Activated CD8-positive, alpha-beta memory T cell treated with anti-CD3 and anti-CD28 coated beads, Interleukin-2, amount 10 ng/mL, durations not matched to agents 7 days and 5 days (primary cell): ENCODE measurements at regions of chr7 and their contacts with region 1.

Region 1: DNA sequence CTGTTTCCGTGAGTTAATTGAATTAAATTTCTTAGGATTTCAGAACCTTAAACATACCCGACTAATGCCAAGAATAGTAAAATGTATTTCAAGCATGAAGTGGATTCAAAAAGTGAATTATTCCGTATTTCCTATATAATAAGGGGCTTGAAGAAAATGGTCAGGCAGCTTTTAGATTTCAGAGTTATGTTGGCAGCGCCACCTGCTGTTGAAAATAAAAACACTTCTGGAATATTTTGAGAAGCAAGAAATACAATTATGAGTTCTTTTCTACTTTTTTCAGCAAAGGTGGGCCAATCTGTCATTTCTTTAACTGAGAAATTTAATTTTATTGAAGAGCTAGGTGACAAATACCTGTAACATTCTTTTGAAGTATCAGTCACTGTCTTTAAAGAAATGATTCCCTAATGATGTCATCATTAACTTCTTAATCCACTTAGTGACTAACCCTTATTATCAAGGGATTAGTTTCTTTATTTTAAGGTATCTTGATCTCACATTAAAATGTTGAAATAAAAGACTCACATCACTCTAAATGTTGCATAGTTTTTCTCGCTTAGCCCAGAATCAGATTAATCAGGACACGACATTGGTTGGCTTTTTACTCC is 36.6 kb upstream of the AGR3 start:
- DNase-seq: no peak
- ATAC-seq: no peak
- H3K4me3 Mint-ChIP-seq: no peak overlapping the region
- H3K27ac Mint-ChIP-seq: no peak overlapping the region
- H3K4me1 Mint-ChIP-seq: peaks cover 37% of the 10 kb centered on the region
- H3K27me3 Mint-ChIP-seq: no peaks in the 10 kb centered on the region

Region 2: DNA sequence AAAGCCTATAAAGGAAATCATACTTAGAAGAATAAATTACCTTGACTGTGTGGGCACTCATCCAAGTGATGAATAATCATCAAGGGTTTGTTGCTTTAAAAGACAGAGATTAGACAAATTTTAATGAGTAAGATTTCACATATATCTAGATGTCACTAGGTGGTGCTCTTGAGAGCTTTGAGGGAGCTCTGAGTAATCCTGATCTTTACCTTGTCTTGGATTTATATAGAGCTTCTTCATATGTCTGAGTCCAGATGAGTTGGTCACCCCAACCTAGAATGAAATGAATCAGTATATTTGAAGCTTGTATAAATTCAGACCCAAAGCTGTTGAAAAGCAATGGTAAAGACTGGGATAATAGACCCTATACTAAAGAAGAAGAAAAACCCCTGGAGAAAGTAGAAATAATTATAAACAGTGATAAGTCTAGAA is 117.3 kb before region 1 on chr7:
- CTCF ChIA-PET with region 1: interaction called, 30 read pairs
- DNase-seq: no peak
- ATAC-seq: peak; percentile 66
- H3K4me3 Mint-ChIP-seq: no peak overlapping the region
- H3K27ac Mint-ChIP-seq: no peak overlapping the region
- H3K4me1 Mint-ChIP-seq: no peaks in the 10 kb centered on the region
- H3K27me3 Mint-ChIP-seq: peaks cover 20% of the 10 kb centered on the region

Region 3: GRCh38 chr7:16891338-16891737 is 27.1 kb before region 1 on chr7:
- CTCF ChIA-PET with region 1: interaction called, 41 read pairs
- DNase-seq: peak; percentile 51
- ATAC-seq: peak; percentile 81
- H3K4me3 Mint-ChIP-seq: no peak overlapping the region
- H3K27ac Mint-ChIP-seq: no peak overlapping the region
- H3K4me1 Mint-ChIP-seq: peaks cover 32% of the 10 kb centered on the region
- H3K27me3 Mint-ChIP-seq: peaks cover 12% of the 10 kb centered on the region